PC-3 (cell line): ENCODE measurements at regions of chr1 and their contacts with region 1.

Region 1: DNA sequence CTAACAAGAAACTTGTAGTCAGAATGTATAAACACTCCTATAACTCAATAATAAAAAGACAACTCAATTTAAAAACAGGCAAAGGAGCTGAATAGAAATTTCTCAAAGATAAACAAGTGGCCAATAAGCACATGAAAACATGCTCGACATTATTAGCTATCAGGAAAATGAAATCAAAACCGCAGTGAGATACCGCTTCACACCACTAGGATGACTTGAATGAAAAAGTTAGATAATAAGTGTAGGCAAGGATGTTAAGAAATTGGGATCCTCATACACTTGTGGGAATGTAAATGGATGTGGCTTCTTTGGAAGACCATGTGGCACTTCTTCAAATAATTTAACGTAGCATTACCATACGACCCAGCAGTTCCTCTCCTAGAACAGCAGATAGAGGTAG is 8.9 kb downstream of the RALGPS2 start:
- DNase-seq: peak; percentile 8
- ATAC-seq: no peak
- H3K4me3 ChIP-seq: no peak overlapping the region
- H3K27ac ChIP-seq: no peak overlapping the region
- H3K4me1 ChIP-seq: peaks cover 7% of the 10 kb centered on the region
- H3K27me3 ChIP-seq: no peaks in the 10 kb centered on the region
- CTCF ChIP-seq: peak; percentile 44

Region 2: DNA sequence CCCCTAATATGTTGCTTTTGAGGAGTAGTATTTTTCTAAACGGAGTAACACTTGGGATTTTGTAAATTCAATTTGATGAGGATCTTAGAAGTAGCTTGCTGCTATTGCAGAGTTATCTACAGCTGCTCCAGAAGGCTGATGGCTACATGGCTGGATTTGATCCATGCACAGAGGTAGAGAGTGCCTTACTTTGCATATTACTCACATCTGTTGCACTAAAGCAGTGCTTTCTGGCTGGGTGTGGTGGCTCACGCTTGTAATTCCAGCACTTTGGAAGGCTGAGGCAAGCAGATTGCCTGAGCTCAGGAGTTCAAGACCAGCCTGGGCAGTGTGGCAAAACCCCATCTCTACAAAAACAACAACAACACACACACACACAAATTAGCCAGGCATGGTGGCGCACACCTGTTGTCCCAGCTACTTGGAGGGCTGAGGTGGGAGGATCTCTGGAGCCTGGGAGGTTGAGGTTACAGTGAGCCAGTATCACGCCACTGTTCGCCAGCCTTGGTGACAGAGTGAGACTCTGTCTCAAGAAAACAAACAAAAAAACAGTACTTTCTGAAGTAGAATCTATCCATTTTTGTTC is 15.7 kb after region 1 on chr1:
- CTCF ChIA-PET with region 1: interaction called, 11 read pairs
- POLR2A ChIA-PET with region 1: no interaction called
- intact Hi-C with region 1: no loop called
- DNase-seq: no peak
- ATAC-seq: no peak
- H3K4me3 ChIP-seq: no peak overlapping the region
- H3K27ac ChIP-seq: no peak overlapping the region
- H3K4me1 ChIP-seq: peaks cover 3% of the 10 kb centered on the region; the same call in 1 of the 2 replicates
- H3K27me3 ChIP-seq: no peaks in the 10 kb centered on the region
- CTCF ChIP-seq: no peak

Region 3: DNA sequence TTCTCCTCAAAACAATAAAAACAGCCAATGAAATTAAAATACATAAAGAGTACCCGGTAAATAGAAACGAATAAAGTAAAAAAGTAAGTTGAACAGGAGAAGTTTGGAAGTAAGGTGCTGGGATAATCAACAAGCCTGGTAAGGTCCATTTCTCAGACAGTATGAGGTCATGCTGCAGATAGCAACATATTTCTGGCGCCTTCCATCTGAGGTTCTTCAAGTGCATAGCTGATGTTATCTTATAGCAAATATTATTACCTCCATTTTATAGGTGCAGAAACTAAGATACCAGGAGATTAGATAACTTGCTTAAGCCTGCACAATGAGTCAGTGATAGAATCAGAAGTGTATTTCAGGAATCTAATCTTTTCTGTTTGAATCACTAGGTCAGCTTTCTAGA is 1196.9 kb after region 1 on chr1:
- CTCF ChIA-PET with region 1: no interaction called
- POLR2A ChIA-PET with region 1: no interaction called
- intact Hi-C with region 1: no loop called
- DNase-seq: no peak
- ATAC-seq: peak; percentile 18; the same call in 1 of the 2 replicates
- H3K4me3 ChIP-seq: no peak overlapping the region
- H3K27ac ChIP-seq: no peak overlapping the region
- H3K4me1 ChIP-seq: peaks cover 11% of the 10 kb centered on the region
- H3K27me3 ChIP-seq: no peaks in the 10 kb centered on the region
- CTCF ChIP-seq: no peak